CD4-positive, alpha-beta memory T cell (primary cell): ENCODE measurements at regions of chr13 and their contacts with region 1.

Region 1: GRCh38 chr13:114110091-114110829 is 22.2 kb downstream of the RASA3 start:
- DNase-seq: peak; percentile 82 to 91 (median 88)
- H3K4me3 ChIP-seq: peak overlapping the region; percentile 42 to 44
- H3K4me3 Mint-ChIP-seq: peak overlapping the region; percentile 84 to 91 (median 88)
- H3K27ac ChIP-seq: peak overlapping the region; percentile 52
- H3K27ac Mint-ChIP-seq: peak overlapping the region; percentile 94 to 98 (median 95)
- H3K4me1 ChIP-seq: peaks cover 96% of the 10 kb centered on the region
- H3K4me1 Mint-ChIP-seq: peaks cover 47 to 90% (median 74%) of the 10 kb centered on the region in 4 donors
- H3K27me3 ChIP-seq: no peaks in the 10 kb centered on the region
- H3K27me3 Mint-ChIP-seq: no peaks in the 10 kb centered on the region

Region 2: DNA sequence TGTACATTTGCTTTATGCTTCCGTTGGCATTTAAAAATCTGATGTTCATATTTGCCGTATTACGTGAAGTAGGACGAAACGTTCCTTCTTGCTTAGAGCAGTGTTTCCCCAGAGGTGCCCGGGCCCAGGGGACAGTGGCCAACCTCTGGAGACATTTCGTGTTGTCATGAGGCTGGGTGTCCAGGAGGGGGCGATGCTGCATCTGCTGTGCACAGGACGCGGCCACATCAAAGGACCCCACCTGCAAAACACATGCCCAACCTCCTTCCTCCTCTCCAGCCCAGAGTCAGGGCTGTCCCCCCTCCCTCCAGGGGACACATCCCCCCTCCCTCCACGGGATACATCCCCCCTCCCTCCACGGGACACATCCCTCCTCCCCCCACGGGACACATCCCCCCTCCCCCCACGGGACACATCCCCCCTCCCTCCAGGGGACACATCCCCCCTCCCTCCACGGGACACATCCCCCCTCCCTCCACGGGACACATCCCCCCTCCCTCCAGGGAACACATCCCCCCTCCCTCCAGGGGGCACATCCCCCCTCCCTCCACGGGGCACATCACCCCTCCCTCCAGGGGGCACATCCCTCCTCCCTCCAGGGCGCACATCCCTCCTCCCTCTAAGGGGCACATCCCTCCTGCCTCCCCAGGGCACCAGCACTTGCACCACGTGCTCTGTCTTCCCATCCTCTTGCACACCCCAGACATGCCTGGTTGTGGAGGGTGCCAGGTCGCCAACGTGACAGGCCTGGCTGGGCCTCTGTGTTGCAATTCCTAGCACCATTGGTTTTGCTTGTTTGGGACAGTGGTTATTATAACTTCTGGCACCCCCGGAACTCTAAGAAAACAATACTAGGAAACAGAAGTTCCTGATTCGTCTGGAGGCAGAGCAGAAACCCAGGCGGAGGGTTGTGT is 293.1 kb before region 1 on chr13:
- CTCF ChIA-PET with region 1: no interaction called
- POLR2A ChIA-PET with region 1: no interaction called
- intact Hi-C with region 1: loop called (anchors 1 kb)
- DNase-seq: peak; percentile 83 to 90 (median 86)
- H3K4me3 ChIP-seq: no peak overlapping the region
- H3K4me3 Mint-ChIP-seq: peak overlapping the region; percentile 43 to 94 (median 78)
- H3K27ac ChIP-seq: no peak overlapping the region
- H3K27ac Mint-ChIP-seq: peak overlapping the region; percentile 37 to 82 (median 68)
- H3K4me1 ChIP-seq: peaks cover 15% of the 10 kb centered on the region
- H3K4me1 Mint-ChIP-seq: peaks cover 14 to 27% (median 20%) of the 10 kb centered on the region in 4 donors
- H3K27me3 ChIP-seq: no peaks in the 10 kb centered on the region
- H3K27me3 Mint-ChIP-seq: peaks cover 1 to 2% of the 10 kb centered on the region in 2 donors

Region 3: DNA sequence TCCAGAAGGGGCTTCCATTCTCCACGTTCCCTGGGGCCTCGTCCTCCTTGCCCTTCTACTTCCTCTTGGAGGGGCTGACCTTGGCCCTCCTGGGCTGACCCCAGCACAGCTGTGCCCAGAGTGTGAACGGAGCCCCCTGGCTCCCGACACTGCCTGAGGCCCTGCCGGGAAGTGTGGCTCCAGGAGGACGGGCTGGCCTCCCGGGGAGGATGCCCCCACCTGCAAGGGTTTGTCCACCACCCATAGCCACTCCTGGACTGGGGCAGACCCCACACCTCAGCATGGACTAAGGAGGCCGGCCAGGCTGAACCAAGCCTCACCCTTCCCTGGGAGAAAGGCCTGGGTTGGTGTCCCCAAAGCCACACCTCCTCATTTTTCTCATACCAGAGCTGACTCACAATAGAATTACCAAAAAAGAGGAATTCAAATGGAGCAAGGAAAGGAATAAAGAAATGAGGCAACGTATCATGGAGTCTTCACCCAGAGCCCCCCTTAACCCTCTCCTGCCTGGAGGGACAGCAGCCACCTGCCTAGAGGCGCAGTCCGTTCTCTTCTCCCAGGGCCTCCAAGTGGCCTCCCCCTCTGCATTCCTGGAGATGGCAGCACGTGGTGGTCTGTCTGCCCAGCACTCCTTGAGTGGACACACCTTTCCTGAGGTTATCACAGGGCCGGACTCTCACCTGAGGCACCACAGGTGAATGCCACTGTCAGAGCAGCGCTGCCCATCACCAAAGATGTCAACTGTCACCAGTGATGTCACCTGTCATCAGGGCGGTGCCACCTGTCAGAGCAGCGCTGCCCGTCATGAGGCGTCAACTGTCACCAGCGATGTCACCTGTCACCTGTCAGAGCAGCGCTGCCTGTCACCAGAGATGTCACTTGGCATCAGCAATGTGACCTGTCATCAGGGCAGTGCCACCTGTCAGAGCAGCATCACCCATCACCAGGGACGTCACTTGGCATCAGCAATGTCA is 133.3 kb before region 1 on chr13:
- CTCF ChIA-PET with region 1: no interaction called
- POLR2A ChIA-PET with region 1: interaction called, 3 read pairs
- intact Hi-C with region 1: loop called (anchors 10 kb)
- DNase-seq: no peak
- H3K4me3 ChIP-seq: no peak overlapping the region
- H3K4me3 Mint-ChIP-seq: peak overlapping the region in 1 of 8 donors; percentile 17
- H3K27ac ChIP-seq: no peak overlapping the region
- H3K27ac Mint-ChIP-seq: peak overlapping the region in 3 of 7 donors; percentile 22 to 91 (median 54)
- H3K4me1 ChIP-seq: no peaks in the 10 kb centered on the region
- H3K4me1 Mint-ChIP-seq: peaks cover 0 to 6% (median 4%) of the 10 kb centered on the region in 4 donors
- H3K27me3 ChIP-seq: no peaks in the 10 kb centered on the region
- H3K27me3 Mint-ChIP-seq: no peaks in the 10 kb centered on the region

Region 4: GRCh38 chr13:114065141-114065925 is 44.9 kb before region 1 on chr13:
- CTCF ChIA-PET with region 1: interaction called, 4 read pairs
- POLR2A ChIA-PET with region 1: interaction called, 42 read pairs
- intact Hi-C with region 1: loop called (anchors 1 kb)
- DNase-seq: peak; percentile 55 to 88 (median 62)
- H3K4me3 ChIP-seq: peak overlapping the region; percentile 47 to 57
- H3K4me3 Mint-ChIP-seq: peak overlapping the region; percentile 77 to 93 (median 84)
- H3K27ac ChIP-seq: peak overlapping the region; percentile 37
- H3K27ac Mint-ChIP-seq: peak overlapping the region; percentile 89 to 96 (median 92)
- H3K4me1 ChIP-seq: peaks cover 60% of the 10 kb centered on the region
- H3K4me1 Mint-ChIP-seq: peaks cover 23 to 70% (median 51%) of the 10 kb centered on the region in 4 donors
- H3K27me3 ChIP-seq: no peaks in the 10 kb centered on the region
- H3K27me3 Mint-ChIP-seq: no peaks in the 10 kb centered on the region

Region 5: DNA sequence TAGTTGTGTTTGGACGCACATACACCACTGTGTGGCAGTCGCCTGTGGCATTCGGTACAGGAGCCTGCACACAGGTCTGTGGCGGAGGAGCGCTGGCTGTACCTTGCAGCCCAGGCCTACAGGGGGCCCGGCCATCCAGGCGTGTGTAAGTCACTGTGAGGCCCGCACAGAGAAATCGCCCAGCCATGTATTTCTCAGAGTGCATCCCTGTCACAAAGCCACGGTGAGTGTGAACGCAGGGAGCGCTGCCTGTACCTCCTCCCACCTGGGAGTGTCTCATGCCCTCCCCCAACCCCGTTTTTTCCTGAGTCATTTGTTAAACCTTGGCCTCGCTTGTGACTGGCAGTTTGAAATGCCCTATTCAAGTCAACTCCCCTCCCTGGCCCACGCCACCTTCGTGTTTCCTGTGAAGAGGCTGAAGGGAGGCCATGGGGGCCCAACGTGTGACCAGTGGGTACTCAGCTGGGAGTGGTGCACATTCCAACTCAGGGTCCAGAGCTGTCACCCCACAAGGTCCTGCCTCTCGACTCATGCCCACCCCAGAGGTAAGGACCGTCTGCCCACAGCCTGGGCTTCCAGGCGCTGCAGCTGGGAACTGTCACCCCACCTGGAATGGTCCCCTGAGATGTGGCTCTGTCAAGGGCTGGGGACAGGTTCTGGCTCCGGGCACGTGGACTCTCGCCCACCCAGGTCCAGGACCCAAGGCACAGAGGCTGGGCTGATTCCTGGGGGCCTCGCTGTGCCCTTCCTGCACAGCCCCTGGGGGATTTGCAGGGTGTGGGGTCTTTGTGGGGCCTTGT is 33.7 kb after region 1 on chr13:
- CTCF ChIA-PET with region 1: interaction called, 7 read pairs
- POLR2A ChIA-PET with region 1: interaction called, 39 read pairs
- intact Hi-C with region 1: loop called (anchors 5 kb)
- DNase-seq: peak in 3 of 5 donors; percentile 42 to 52 (median 51)
- H3K4me3 ChIP-seq: peak overlapping the region in 1 of 2 donors; percentile 43
- H3K4me3 Mint-ChIP-seq: peak overlapping the region in 2 of 8 donors; percentile 32 to 78
- H3K27ac ChIP-seq: peak overlapping the region; percentile 56
- H3K27ac Mint-ChIP-seq: peak overlapping the region in 5 of 7 donors; percentile 91 to 96 (median 94)
- H3K4me1 ChIP-seq: peaks cover 90% of the 10 kb centered on the region
- H3K4me1 Mint-ChIP-seq: peaks cover 38 to 48% (median 41%) of the 10 kb centered on the region in 4 donors
- H3K27me3 ChIP-seq: no peaks in the 10 kb centered on the region
- H3K27me3 Mint-ChIP-seq: no peaks in the 10 kb centered on the region

Region 6: GRCh38 chr13:114226699-114227323 is 116.6 kb after region 1 on chr13:
- CTCF ChIA-PET with region 1: interaction called, 22 read pairs
- POLR2A ChIA-PET with region 1: interaction called, 12 read pairs
- intact Hi-C with region 1: loop called (anchors 1 kb)
- DNase-seq: peak; percentile 75 to 80 (median 78)
- H3K4me3 ChIP-seq: no peak overlapping the region
- H3K4me3 Mint-ChIP-seq: peak overlapping the region; percentile 7 to 74 (median 48)
- H3K27ac ChIP-seq: no peak overlapping the region
- H3K27ac Mint-ChIP-seq: peak overlapping the region; percentile 69 to 89 (median 78)
- H3K4me1 ChIP-seq: peaks cover 34% of the 10 kb centered on the region
- H3K4me1 Mint-ChIP-seq: peaks cover 26 to 45% (median 36%) of the 10 kb centered on the region in 4 donors
- H3K27me3 ChIP-seq: no peaks in the 10 kb centered on the region
- H3K27me3 Mint-ChIP-seq: peaks cover 3% of the 10 kb centered on the region in 2 donors